Activated naive CD4-positive, alpha-beta T cell treated with anti-CD3 and anti-CD28 coated beads for 36 hours (primary cell): ENCODE measurements at regions of chr15 and their contacts with region 1.

Region 1: GRCh38 chr15:77024271-77025082 is 29.6 kb downstream of the PSTPIP1 start:
- DNase-seq: peak; percentile 74
- H3K4me3 Mint-ChIP-seq: no peak overlapping the region
- H3K27ac Mint-ChIP-seq: peak overlapping the region; percentile 100
- H3K4me1 Mint-ChIP-seq: peaks cover 47% of the 10 kb centered on the region
- H3K27me3 Mint-ChIP-seq: no peaks in the 10 kb centered on the region

Region 2: GRCh38 chr15:76905013-76905839 is 119.3 kb before region 1 on chr15 and contains the start of gene SCAPER:
- CTCF ChIA-PET with region 1: no interaction called
- intact Hi-C with region 1: loop called (anchors 5 kb)
- DNase-seq: peak; percentile 93
- H3K4me3 Mint-ChIP-seq: peak within 1 kb of the TSS; percentile 83
- H3K27ac Mint-ChIP-seq: peak within 1 kb of the TSS; percentile 91
- H3K4me1 Mint-ChIP-seq: peaks cover 31% of the 10 kb centered on the region
- H3K27me3 Mint-ChIP-seq: no peaks in the 10 kb centered on the region
- total RNA-seq, gene SCAPER: 28.5 to 28.9 TPM

Region 3: GRCh38 chr15:76987926-76988860 is 36.3 kb before region 1 on chr15:
- CTCF ChIA-PET with region 1: interaction called, 6 read pairs
- intact Hi-C with region 1: loop called (anchors 1 kb)
- DNase-seq: peak; percentile 92
- H3K4me3 Mint-ChIP-seq: peak overlapping the region; percentile 53
- H3K27ac Mint-ChIP-seq: peak overlapping the region; percentile 98
- H3K4me1 Mint-ChIP-seq: peaks cover 43% of the 10 kb centered on the region
- H3K27me3 Mint-ChIP-seq: no peaks in the 10 kb centered on the region

Region 4: DNA sequence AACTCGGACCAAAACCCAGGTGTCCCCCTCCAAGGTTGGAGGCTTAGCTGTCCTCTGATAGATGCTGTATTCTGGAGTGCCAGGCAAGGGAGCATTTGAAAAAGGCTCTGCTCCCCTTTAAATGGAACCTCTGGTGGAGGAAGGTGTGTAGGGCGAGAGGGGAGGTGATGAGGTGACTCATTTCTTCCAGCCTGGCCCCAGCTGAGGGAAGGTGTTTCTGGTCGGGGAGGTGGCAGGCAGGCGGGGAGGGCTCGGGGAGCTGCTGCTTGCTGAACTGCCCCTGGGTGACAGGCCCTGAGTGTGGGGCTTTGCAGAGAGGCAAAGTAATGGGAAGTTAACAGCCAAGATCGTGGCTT is 10.7 kb before region 1 on chr15:
- CTCF ChIA-PET with region 1: interaction called, 21 read pairs
- intact Hi-C with region 1: loop called (anchors 1 kb)
- DNase-seq: peak; percentile 97
- H3K4me3 Mint-ChIP-seq: peak overlapping the region; percentile 61
- H3K27ac Mint-ChIP-seq: peak overlapping the region; percentile 89
- H3K4me1 Mint-ChIP-seq: peaks cover 92% of the 10 kb centered on the region
- H3K27me3 Mint-ChIP-seq: no peaks in the 10 kb centered on the region

Region 5: DNA sequence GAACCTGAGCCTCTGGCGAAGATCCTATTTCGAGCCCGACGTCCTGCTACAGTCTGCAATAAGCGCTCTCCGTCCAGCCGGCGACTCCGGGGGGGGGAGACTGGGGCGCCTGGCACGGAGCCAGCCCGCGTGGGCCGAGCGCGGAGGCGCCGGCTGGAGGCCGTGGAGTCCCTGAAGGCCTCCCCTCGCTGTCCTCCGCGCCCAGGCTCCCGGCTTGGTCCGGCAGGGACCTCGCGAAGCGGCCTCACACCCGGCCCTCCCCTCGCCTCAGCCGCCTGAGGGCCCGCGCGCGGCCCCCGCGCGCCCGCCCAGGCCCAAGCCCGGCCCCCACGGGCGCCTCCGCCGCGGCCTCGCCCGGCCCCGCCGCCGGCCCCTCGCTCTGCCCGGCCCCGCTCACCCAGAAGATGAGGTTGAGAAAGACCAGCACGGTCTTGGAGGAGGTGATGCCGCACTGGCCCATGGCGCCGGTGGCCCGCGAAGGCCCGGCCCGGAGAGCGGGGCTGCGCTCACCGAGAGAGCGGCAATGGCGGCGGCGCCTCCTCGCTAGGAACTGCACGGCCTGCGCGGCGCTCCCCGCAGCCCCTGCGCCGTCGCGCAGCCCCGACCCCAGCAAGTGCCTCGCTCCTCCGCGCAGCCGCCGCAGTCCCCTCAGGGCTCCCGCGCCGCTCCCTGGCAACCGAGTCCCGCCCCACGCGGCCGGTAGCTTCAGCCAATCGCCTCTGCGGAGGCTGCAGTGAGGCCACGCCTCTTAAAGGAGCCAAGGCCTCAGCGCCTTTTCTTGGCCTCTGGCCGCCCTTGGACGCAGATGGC is 46.2 kb after region 1 on chr15 and contains the start of gene TSPAN3:
- CTCF ChIA-PET with region 1: no interaction called
- intact Hi-C with region 1: loop called (anchors 1 kb)
- DNase-seq: peak; percentile 93
- H3K4me3 Mint-ChIP-seq: peak within 1 kb of the TSS; percentile 77
- H3K27ac Mint-ChIP-seq: peak within 1 kb of the TSS; percentile 71
- H3K4me1 Mint-ChIP-seq: peaks cover 35% of the 10 kb centered on the region
- H3K27me3 Mint-ChIP-seq: no peaks in the 10 kb centered on the region
- total RNA-seq, gene TSPAN3: 21.9 to 24.9 TPM